Gastrocnemius medialis (tissue), 4 donors: ENCODE measurements at regions of chr6 and their contacts with region 1.

Region 1: GRCh38 chr6:83192871-83193746 is at the starts of genes PGM3 and RWDD2A:
- DNase-seq: peak; percentile 79 to 81
- ATAC-seq: peak; percentile 95 to 97
- H3K4me3 ChIP-seq: peak within 1 kb of the TSS; percentile 83 to 96 (median 87)
- H3K27ac ChIP-seq: peak within 1 kb of the TSS; percentile 80 to 90 (median 86)
- H3K4me1 ChIP-seq: peaks cover 6 to 9% of the 10 kb centered on the region in 2 donors
- H3K27me3 ChIP-seq: no peaks in the 10 kb centered on the region
- CTCF ChIP-seq: no peak
- POLR2A ChIP-seq: peak; percentile 70 to 73
- total RNA-seq, gene PGM3: 3.9 to 13.2 (median 8.8) TPM
- total RNA-seq, gene RWDD2A: 0.61 to 1.9 (median 1.2) TPM

Region 2: GRCh38 chr6:82247634-82248232 is 945.4 kb before region 1 on chr6 and contains the start of gene IBTK:
- in situ Hi-C with region 1: loop called in 1 of 4 experiments (anchors 25 kb)
- intact Hi-C with region 1: loop called (anchors 10 kb)
- DNase-seq: peak; percentile 94 to 97
- ATAC-seq: peak; percentile 92 to 95
- H3K4me3 ChIP-seq: peak within 1 kb of the TSS; percentile 79 to 98 (median 86)
- H3K27ac ChIP-seq: peak within 1 kb of the TSS; percentile 89 to 98 (median 92)
- H3K4me1 ChIP-seq: peaks cover 31 to 44% of the 10 kb centered on the region in 2 donors
- H3K27me3 ChIP-seq: no peaks in the 10 kb centered on the region
- CTCF ChIP-seq: no peak
- POLR2A ChIP-seq: peak; percentile 71 to 76
- total RNA-seq, gene IBTK: 26.2 to 31.7 (median 29.5) TPM